Activated CD4-positive, alpha-beta memory T cell treated with anti-CD3 and anti-CD28 coated beads for 36 hours (primary cell): ENCODE measurements at regions of chr20 and their contacts with region 1.

Region 1: DNA sequence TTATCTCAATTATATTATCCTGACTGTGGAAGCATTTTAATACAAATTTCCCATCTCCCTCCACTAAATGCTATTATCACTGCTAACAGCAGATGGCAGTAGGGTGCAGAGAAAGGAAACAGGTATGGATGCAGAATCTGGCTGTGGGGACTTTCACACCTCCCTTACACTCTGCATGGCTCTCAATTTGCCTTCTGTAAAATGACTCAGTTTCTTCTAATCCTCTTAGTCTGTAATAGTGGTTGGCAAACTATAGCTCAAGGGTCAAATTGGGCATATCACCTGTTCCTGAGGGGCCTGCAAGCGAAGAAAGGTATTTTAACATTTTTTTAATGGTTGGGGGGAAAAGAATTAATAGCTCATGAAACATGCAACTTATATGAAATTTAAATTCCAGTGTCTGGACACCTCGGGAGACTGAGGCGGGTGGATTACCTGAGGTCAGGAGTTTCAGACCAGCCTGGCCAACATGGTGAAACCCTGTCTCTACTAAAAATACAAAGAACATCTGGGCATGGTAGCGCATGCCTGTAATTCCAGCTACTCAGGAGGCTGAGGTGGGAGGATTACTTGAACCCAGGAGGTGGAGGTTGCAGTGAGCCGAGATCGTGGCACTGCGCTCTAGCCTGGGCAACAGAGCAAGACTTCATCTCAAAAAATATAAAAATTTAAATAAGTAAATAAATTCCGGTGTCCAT is 83.5 kb downstream of the ZMYND8 start:
- DNase-seq: peak; percentile 53
- H3K4me3 Mint-ChIP-seq: peak overlapping the region; percentile 51
- H3K27ac Mint-ChIP-seq: peak overlapping the region; percentile 83
- H3K4me1 Mint-ChIP-seq: peaks cover 39% of the 10 kb centered on the region
- H3K27me3 Mint-ChIP-seq: no peaks in the 10 kb centered on the region

Region 2: GRCh38 chr20:47196091-47197081 is 76.7 kb before region 1 on chr20:
- CTCF ChIA-PET with region 1: interaction called, 64 read pairs
- POLR2A ChIA-PET with region 1: interaction called, 3 read pairs
- intact Hi-C with region 1: loop called (anchors 1 kb)
- DNase-seq: peak; percentile 88
- H3K4me3 Mint-ChIP-seq: no peak overlapping the region
- H3K27ac Mint-ChIP-seq: no peak overlapping the region
- H3K4me1 Mint-ChIP-seq: peaks cover 15% of the 10 kb centered on the region
- H3K27me3 Mint-ChIP-seq: peaks cover 3% of the 10 kb centered on the region

Region 3: GRCh38 chr20:47283411-47283810 is 10.4 kb after region 1 on chr20:
- CTCF ChIA-PET with region 1: interaction called, 11 read pairs
- POLR2A ChIA-PET with region 1: interaction called, 4 read pairs
- intact Hi-C with region 1: no loop called
- DNase-seq: no peak
- H3K4me3 Mint-ChIP-seq: no peak overlapping the region
- H3K27ac Mint-ChIP-seq: no peak overlapping the region
- H3K4me1 Mint-ChIP-seq: no peaks in the 10 kb centered on the region
- H3K27me3 Mint-ChIP-seq: no peaks in the 10 kb centered on the region

Region 4: DNA sequence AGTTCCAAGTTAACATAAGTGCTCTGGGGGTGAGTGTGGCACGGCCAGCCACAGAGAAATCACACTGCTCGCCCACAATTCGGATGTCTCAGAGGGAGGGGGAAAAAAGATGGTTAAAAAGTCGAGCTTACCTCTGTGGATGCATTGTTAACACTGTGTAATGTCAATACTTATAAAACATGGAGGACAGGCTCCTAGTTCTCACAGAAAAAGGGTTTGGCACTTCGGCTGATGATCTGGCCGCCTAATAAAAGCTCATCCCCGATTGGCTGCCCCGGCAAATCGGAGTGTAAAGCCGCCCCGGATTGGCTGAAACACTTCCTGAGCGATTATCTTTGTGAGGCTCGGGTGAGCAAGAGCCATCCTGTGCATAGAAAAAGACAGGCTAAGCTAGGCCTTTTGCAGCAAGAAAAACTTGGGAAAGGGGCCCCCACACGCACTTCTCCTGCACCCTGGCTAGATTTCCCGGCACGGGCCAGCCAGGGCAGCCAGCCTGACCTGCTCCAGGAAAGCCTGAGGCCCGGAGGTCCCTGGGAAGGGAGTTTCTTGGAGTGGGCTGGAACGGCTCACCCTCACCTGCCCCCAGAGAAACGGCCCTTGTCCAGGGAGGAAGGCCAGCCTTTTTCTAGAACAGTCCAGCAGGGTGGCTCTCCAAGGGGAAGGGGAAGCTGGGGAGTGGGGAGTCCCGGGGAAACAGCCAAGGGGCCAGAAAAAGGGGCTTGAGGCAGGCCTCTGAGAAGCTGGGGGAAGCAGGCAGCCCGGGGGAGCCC is 83.7 kb after region 1 on chr20 and contains the start of gene ZMYND8:
- CTCF ChIA-PET with region 1: interaction called, 92 read pairs
- POLR2A ChIA-PET with region 1: interaction called, 26 read pairs
- intact Hi-C with region 1: loop called (anchors 1 kb)
- DNase-seq: peak; percentile 99
- H3K4me3 Mint-ChIP-seq: peak within 1 kb of the TSS; percentile 96
- H3K27ac Mint-ChIP-seq: peak within 1 kb of the TSS; percentile 98
- H3K4me1 Mint-ChIP-seq: peaks cover 35% of the 10 kb centered on the region
- H3K27me3 Mint-ChIP-seq: no peaks in the 10 kb centered on the region
- total RNA-seq, gene ZMYND8: 28.1 to 29.6 TPM

Region 5: DNA sequence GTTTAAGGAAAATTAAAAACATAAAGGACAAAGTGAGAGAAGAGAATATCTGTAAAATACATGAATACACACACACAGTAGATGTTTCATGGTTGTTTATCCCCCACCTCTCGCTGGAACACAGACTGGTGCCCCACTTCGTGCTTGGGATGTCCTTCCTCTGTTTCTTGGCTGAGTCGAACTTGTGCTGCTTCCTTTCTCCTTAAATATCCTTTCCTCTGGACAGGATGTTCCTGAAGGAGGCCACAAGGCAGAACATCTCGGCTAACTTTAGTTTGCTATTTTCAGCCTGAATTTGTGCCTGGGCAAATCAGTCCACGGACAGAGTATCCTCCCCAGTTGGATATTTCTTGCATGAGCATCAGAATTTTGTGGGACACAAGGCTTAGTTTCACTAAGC is 138.1 kb after region 1 on chr20:
- CTCF ChIA-PET with region 1: interaction called, 12 read pairs
- POLR2A ChIA-PET with region 1: interaction called, 3 read pairs
- intact Hi-C with region 1: no loop called
- DNase-seq: no peak
- H3K4me3 Mint-ChIP-seq: peak overlapping the region; percentile 13
- H3K27ac Mint-ChIP-seq: no peak overlapping the region
- H3K4me1 Mint-ChIP-seq: peaks cover 31% of the 10 kb centered on the region
- H3K27me3 Mint-ChIP-seq: no peaks in the 10 kb centered on the region

Region 6: DNA sequence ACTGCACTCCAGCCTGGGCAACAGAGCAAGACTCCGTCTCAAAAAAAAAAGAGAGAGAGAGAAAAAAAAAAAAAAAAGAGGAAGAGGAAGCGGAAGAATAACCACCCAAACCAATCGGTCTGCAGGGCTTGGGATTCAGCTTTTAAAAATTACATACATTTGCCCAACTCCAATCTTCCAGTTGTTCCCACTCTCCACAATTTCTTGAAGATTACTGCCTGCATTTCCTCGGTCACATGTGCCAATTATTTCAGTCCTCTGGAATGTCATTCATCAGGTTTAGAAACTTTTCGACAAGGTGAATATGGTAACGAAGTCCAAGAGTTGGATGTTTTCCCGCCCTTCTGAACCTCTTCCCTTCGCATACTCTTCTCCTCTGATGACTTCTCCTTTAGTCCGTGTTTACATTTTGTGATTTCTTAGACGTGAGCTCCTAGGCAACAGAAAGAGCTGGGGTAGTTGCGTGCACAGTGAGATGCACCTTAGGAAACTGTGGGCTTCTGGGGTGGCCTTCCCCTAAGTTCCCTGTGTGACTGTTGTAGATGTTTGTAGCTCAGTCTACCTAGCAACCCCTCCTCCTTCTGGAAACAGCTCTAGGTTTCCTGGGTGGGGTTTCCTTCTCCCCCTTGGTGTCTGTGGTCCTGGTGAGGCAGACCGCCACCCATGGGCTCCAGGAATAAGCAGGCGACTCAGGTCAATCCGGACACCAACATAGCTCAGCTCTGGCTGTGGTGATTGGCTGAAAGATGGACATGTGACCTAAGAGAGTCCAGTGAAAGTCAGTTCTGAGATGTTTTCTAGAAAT is 165.7 kb after region 1 on chr20:
- CTCF ChIA-PET with region 1: no interaction called
- POLR2A ChIA-PET with region 1: no interaction called
- intact Hi-C with region 1: no loop called
- DNase-seq: peak; percentile 33
- H3K4me3 Mint-ChIP-seq: no peak overlapping the region
- H3K27ac Mint-ChIP-seq: no peak overlapping the region
- H3K4me1 Mint-ChIP-seq: peaks cover 6% of the 10 kb centered on the region
- H3K27me3 Mint-ChIP-seq: no peaks in the 10 kb centered on the region

Region 7: GRCh38 chr20:47487175-47487917 is 214.3 kb after region 1 on chr20:
- CTCF ChIA-PET with region 1: interaction called, 3 read pairs
- POLR2A ChIA-PET with region 1: interaction called, 6 read pairs
- intact Hi-C with region 1: loop called (anchors 1 kb)
- DNase-seq: peak; percentile 77
- H3K4me3 Mint-ChIP-seq: peak overlapping the region; percentile 30
- H3K27ac Mint-ChIP-seq: peak overlapping the region; percentile 97
- H3K4me1 Mint-ChIP-seq: peaks cover 55% of the 10 kb centered on the region
- H3K27me3 Mint-ChIP-seq: no peaks in the 10 kb centered on the region

Region 8: DNA sequence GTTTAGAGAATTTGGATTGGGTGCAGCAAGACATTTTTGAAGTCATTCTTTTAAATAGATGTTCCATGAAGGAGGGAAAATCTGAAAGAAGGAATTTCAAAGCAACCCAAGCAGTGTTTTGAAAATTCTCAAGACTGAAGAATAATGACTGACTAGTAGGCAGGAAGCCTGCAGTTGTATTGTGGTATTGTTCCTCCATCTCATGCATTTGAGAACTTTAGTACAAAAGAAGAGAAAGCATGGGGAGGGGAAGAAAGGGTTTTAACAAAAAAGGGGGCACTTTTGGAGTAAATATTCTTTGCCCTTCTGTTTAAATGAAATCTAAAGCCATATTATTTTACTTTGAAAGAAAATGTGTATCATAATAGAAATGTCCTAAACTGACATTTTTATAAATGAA is 235.2 kb after region 1 on chr20:
- CTCF ChIA-PET with region 1: interaction called, 12 read pairs
- POLR2A ChIA-PET with region 1: no interaction called
- intact Hi-C with region 1: loop called (anchors 5 kb)
- DNase-seq: no peak
- H3K4me3 Mint-ChIP-seq: peak overlapping the region; percentile 43
- H3K27ac Mint-ChIP-seq: peak overlapping the region; percentile 69
- H3K4me1 Mint-ChIP-seq: peaks cover 77% of the 10 kb centered on the region
- H3K27me3 Mint-ChIP-seq: no peaks in the 10 kb centered on the region